ENCODE measurements at regions of chr17 and their contacts with region 1.

Region 1: GRCh38 chr17:40355123-40355803 is 9.3 kb downstream of the GJD3 start:
- DNase-seq: peak; percentile 82 to 88 (median 87)
- ATAC-seq: peak; percentile 90
- H3K4me3 ChIP-seq: no peak overlapping the region
- H3K27ac ChIP-seq: no peak overlapping the region; the same call in 2 of the 3 replicates
- H3K4me1 ChIP-seq: peaks cover 0 to 58% of the 10 kb centered on the region in 2 experiments; a peak in 3 of 5 replicates
- H3K27me3 ChIP-seq: no peaks in the 10 kb centered on the region
- CTCF ChIP-seq: peak; percentile 94 to 98 (median 95)
- EP300 ChIP-seq: no peak
- POLR2A ChIP-seq: no peak
- RAD21 ChIP-seq: peak; percentile 96 to 98

Region 2: DNA sequence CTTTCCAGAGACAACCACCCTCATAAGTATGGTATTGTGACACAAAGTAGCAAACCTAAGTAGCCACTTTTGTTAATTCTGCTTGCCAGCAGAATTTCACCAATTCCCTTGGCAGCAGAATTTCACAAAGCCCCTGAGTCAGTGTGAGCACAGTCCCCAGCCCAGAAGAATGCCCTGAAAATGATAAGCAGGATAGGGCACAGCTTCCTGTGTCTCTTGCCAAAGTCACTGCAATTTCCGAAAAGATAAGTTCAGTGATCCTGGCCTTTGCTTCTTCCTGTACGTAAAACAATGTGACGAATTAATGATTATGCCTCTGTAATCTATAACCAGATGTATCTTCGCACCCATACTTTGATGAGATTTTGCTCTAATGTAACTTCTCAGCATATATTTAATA is 152.1 kb before region 1 on chr17:
- CTCF ChIA-PET with region 1: no interaction called
- POLR2A ChIA-PET with region 1: no interaction called
- in situ Hi-C with region 1: loop called (anchors 5 kb)
- intact Hi-C with region 1: loop called (anchors 1 kb)
- DNase-seq: no peak
- ATAC-seq: no peak
- H3K4me3 ChIP-seq: no peak overlapping the region
- H3K27ac ChIP-seq: no peak overlapping the region
- H3K4me1 ChIP-seq: no peaks in the 10 kb centered on the region; a peak in 1 of 5 replicates
- H3K27me3 ChIP-seq: no peaks in the 10 kb centered on the region
- CTCF ChIP-seq: no peak
- EP300 ChIP-seq: no peak
- POLR2A ChIP-seq: no peak
- RAD21 ChIP-seq: no peak

Measured in K562 (cell line).